ENCODE measurements at regions of chr2 and their contacts with region 1.

Region 1: DNA sequence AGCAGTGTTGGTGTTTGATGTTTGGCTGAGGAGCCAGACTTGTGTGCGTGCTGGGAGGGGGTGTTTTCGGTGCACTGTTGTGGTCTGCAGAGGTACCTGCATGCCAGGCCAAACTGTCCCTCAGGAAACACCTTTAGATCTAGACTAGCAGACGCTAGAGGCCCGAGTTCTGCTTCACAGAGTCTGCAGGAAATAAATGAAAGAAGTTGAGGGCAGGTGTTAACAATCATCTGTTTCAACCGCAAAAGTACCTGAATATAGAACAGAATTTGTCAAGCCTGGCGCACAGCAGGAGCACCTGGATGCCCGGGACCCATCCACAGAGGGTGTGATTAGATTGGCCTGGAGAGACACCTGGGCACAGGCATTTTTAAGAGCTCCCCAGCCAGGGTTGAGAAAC is 40.5 kb upstream of the REL start:
- DNase-seq: no peak
- CTCF ChIP-seq: no peak

Region 2: DNA sequence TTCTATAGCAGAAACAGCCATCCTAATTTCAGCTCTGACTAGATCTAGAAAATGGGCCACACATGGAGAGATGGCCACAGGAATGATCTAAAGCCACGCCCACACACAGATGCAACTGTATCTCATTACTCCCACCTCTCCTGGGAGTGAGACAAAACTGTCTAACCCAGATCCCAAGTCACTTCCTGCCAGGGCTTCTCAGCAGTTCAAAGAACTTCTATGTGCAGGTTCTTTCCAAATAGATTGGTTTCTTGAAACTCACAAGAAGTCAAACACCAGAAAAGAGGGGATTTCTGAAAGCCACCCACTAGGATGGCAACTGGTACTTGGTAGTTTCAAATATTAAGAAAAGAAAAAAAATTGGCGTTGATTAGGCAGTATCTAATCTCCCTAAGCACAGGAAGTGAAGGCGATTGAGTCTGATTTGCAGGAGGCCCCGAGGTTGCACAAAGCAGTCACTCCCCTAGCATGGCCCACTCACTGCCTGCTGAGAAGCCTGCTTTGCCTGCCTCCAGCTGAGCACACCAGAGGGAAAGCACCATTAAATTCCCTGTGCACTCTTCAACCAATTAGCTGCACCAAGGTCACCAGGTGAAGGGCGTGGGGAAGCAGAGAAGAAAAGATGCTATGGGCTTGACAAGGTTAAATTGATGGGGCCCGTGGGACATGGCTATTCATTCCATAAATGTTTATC is 33.7 kb before region 1 on chr2:
- CTCF ChIA-PET with region 1: interaction called, 11 read pairs
- POLR2A ChIA-PET with region 1: no interaction called
- DNase-seq: peak; percentile 66
- CTCF ChIP-seq: no peak

Region 3: DNA sequence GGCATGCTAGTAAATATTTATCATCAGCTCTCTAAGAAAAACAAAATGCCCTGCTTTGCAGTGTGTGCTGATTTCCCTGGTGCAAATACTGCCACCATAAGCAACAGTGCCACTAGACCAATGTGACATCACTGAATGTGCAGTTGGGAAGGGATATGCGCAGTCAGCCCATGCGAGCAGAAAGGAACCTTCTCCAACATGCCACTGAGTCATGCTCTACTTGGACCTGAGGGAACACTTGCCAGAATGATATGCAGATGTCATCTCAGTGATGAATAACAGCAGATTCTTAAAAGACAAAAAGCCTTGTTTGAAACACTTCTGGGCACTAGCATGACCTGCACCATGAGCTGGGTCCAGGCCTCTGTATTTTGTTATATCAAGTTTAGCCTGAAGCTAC is 14.8 kb before region 1 on chr2:
- CTCF ChIA-PET with region 1: interaction called, 29 read pairs
- POLR2A ChIA-PET with region 1: interaction called, 3 read pairs
- DNase-seq: no peak
- CTCF ChIP-seq: no peak

Region 4: DNA sequence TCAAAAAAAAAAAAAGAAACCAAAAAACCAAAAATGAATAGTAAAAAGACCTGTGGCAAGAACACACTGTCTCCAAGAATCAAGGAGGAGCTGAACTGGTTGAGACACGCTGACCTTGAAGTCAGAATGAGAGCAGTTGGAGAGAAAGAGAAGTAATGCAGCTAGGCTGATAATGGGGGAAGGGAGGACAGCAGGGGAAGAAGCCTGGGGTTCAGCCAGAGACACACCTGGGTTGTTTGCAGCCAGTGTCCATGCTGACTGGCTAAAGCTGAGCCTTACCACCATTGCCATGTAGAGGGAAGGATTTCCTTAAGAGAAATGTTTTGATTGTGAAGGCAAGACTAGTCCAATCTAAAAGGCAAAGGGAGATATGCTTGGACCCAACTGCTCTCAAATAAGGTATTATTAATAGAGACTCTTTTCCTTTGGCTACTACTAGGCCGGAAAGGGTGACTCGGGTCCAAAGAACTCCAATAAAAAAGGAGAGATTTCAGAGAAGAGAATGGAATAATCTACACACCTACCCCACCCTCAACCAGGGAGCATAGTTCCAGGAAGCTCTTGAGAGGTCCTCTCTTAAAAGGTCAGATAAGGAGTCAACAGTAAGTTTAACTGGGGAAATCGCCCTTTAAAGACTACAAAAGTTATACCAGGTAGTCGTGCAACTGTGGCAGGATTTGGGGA is 15.2 kb after region 1 on chr2:
- CTCF ChIA-PET with region 1: interaction called, 10 read pairs
- POLR2A ChIA-PET with region 1: no interaction called
- DNase-seq: no peak
- CTCF ChIP-seq: no peak

Region 5: DNA sequence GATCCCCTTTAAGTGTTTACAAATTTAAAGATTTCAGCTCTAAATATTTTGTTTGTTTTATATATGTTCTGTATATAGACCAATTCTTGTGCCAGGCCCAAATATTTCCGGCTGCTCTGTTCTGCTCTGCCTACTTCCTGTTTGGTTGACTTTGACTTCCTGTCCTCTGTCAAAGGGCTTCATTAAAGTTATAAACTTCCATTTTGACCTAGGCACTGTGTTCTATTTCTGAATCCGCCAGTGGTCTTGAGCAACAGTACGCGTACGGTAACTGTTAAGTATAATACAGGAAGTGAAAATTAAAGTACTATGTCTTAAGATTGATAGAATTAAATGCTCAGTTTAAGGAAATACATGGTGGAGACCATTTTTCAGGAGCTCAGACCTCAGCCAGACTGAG is 27.0 kb after region 1 on chr2:
- CTCF ChIA-PET with region 1: interaction called, 19 read pairs
- POLR2A ChIA-PET with region 1: no interaction called
- DNase-seq: no peak
- CTCF ChIP-seq: no peak

Region 6: GRCh38 chr2:60881047-60881932 is 40.4 kb after region 1 on chr2 and contains the start of gene REL:
- CTCF ChIA-PET with region 1: interaction called, 13 read pairs
- POLR2A ChIA-PET with region 1: interaction called, 9 read pairs
- DNase-seq: peak; percentile 93
- CTCF ChIP-seq: no peak